ENCODE measurements at regions of chr17 and their contacts with region 1.

Region 1: DNA sequence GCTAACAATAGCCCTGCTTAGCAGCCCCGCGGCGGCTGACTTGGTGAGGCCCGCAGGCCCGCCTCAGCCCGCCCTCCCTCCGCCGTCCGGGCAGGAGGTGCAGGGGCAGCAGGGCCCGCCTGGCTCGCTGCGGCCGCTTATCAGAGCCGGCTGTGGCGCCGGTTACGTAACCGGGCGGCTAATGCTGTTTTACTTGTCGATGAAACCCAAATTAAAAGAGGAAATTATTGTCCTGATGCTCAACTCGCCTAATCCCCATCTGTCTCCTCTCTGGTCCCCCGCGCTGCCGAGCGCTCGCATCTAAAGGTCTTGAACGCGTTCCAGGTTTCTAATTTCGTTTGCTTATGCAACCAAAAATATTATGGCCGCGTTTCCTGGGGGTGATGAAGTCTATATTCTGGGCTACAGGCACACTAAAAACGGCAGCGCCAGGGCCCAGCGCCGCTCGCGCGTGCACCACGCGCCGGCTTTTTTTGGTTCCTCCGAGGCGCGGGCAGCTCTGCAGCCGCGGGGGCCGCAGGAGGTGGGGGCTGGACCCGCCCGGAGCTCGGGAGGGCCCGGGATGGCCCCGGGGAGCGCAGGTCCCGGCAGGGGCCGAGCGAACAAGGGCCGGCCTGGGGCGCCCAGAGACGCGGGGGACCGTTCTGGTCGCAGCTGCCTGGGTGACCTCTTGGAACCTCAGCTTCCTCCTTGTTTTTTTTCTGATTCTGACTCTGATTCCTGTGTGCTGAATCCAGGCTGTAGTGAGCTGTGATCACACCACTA is 65.2 kb upstream of the TOB1 start:
- DNase-seq: peak; percentile 83 to 86
- H3K4me3 ChIP-seq: peak overlapping the region; percentile 34 to 46
- H3K27ac ChIP-seq: peak overlapping the region; percentile 94 to 98
- H3K4me1 ChIP-seq: no peaks in the 10 kb centered on the region
- H3K27me3 ChIP-seq: no peaks in the 10 kb centered on the region
- CTCF ChIP-seq: no peak
- POLR2A ChIP-seq: peak; percentile 7 to 29

Region 2: DNA sequence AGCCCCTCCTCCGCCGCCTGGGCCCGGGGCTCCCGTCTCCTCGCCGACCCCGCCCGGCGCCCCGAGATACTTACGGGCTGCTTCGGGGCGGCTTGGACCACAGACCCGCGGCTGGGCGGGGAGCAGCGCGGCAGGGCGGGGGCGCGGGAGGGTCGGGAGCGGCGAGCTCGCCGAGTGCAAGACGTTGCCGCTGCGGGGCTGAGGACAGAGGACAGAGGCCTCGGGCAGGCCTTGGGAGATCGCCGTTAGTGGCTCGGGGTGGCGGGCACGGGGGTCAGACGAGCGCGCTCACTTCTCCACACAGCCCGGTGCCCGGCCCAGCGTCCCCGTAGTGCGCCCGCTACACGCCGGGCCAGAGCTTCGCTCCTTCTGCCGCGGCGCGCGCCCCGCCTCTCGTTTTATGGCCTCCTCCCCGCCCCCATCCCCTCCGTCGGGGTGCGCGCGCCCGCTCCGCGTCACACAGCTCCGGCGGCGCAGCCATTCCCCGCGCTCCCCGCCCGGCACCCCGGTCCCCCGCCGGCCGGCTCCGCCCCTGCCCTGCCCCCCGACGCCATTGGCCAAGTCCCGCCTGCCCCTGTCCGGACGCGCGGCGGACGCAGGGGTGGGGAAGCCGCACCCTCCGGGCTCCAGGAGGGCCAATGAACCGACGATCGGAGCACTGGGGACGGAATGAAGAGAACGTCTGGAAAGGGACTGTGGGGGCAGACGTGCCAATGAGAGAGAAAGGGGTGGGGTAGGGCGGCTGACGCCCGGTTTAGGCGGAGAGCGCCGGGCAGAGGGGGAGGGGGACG is 65.1 kb before region 1 on chr17 and contains the start of gene TOB1:
- intact Hi-C with region 1: loop called (anchors 2 kb)
- DNase-seq: peak; percentile 97 to 98
- H3K4me3 ChIP-seq: peak within 1 kb of the TSS; percentile 91 to 99
- H3K27ac ChIP-seq: peak within 1 kb of the TSS; percentile 99
- H3K4me1 ChIP-seq: peaks cover 0 to 5% of the 10 kb centered on the region in 2 donors
- H3K27me3 ChIP-seq: no peaks in the 10 kb centered on the region
- CTCF ChIP-seq: peak in 2 of 4 experiments; percentile 4 to 7
- POLR2A ChIP-seq: peak; percentile 99 to 100
- total RNA-seq, gene TOB1: 16.5 to 64.3 (median 27.5) TPM

Region 3: GRCh38 chr17:50902372-50903353 is 28.7 kb before region 1 on chr17:
- intact Hi-C with region 1: no loop called
- DNase-seq: no peak
- H3K4me3 ChIP-seq: no peak overlapping the region
- H3K27ac ChIP-seq: peak overlapping the region; percentile 93 to 96
- H3K4me1 ChIP-seq: peaks cover 5 to 10% of the 10 kb centered on the region in 2 donors
- H3K27me3 ChIP-seq: no peaks in the 10 kb centered on the region
- CTCF ChIP-seq: no peak
- POLR2A ChIP-seq: no peak

Region 4: DNA sequence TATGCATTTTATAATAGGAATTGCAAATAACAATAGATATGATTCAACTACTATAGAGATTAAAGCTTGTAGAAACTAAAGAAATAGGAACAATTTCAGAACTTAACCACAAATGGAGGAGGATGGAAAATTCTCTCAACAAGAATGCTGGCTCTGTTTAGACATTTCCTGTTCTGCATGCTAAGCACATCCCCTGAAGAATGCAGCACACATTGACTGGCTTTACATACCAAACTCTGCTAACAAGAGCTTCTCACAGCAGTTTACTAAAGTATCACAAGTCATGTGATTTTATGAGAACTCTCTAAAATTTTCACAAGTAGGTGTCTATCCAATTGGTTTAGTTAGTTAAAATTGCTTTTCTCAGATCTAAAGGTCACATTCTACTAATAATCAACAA is 104.1 kb after region 1 on chr17:
- intact Hi-C with region 1: no loop called
- DNase-seq: no peak
- H3K4me3 ChIP-seq: no peak overlapping the region
- H3K27ac ChIP-seq: peak overlapping the region in 1 of 2 donors; percentile 12
- H3K4me1 ChIP-seq: no peaks in the 10 kb centered on the region
- H3K27me3 ChIP-seq: no peaks in the 10 kb centered on the region
- CTCF ChIP-seq: no peak
- POLR2A ChIP-seq: no peak